ENCODE measurements at regions of chr6 and their contacts with region 1.

Region 1: DNA sequence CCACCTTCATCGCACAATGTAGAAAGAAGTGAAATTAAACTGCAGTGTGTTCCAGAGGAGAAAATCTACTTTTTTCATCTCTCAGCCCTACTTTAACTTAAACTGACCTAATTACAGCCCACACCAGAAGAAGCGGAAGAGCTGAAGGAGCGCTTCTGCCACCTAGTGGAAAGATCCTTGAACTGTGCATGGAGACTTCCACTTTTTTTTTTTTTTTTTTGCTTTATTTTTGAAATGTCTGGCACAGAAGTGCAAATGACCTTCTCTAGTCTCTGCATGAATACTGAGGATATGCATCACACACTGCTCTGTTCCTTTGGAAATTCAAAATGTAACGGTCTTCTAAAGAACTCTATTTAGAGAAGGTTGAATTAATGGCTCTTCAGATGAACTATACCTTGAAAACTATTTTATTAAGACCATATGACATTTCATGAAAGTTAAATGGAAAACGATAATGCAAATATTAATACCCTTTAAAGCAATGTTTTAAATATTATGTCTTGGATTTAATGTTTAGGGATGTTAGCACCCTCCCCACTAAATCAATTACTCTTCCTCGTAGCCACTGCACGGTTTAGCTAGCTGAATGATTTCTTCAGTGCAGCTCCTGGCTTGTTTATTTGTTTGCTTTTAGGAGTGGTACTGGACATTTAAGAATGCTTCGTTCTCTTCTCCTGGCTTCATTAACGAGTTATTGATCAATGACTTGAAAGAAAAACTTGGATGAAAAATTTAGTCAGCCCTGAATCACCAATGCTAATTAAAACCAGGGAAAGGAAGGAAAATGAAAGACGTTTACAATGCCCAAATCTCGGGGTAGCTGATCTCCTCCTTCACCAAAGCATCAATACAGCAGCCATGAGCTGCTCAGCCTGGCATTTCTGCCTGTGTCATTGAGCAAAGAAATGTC is 569.6 kb upstream of the GJE1 start:
- DNase-seq: peak; percentile 84
- ATAC-seq: peak; percentile 93
- H3K4me3 ChIP-seq: peak overlapping the region; percentile 20 to 71 (median 53)
- H3K4me3 Mint-ChIP-seq: peak overlapping the region; percentile 83
- H3K27ac ChIP-seq: peak overlapping the region in 1 of 2 donors; percentile 0
- H3K27ac Mint-ChIP-seq: peak overlapping the region; percentile 23
- H3K4me1 ChIP-seq: peaks cover 5 to 11% of the 10 kb centered on the region in 2 donors
- H3K4me1 Mint-ChIP-seq: peaks cover 10% of the 10 kb centered on the region
- H3K27me3 ChIP-seq: no peaks in the 10 kb centered on the region
- H3K27me3 Mint-ChIP-seq: peaks cover 4% of the 10 kb centered on the region
- CTCF ChIP-seq: peak; percentile 95

Region 2: GRCh38 chr6:139881728-139882211 is 1681.3 kb before region 1 on chr6:
- CTCF ChIA-PET with region 1: interaction called, 3 read pairs
- POLR2A ChIA-PET with region 1: no interaction called
- intact Hi-C with region 1: loop called (anchors 5 kb)
- DNase-seq: peak; percentile 51
- ATAC-seq: peak; percentile 36
- H3K4me3 ChIP-seq: no peak overlapping the region
- H3K4me3 Mint-ChIP-seq: no peak overlapping the region
- H3K27ac ChIP-seq: no peak overlapping the region
- H3K27ac Mint-ChIP-seq: no peak overlapping the region
- H3K4me1 ChIP-seq: peaks cover 24 to 25% of the 10 kb centered on the region in 2 donors
- H3K4me1 Mint-ChIP-seq: peaks cover 24% of the 10 kb centered on the region
- H3K27me3 ChIP-seq: no peaks in the 10 kb centered on the region
- H3K27me3 Mint-ChIP-seq: peaks cover 3% of the 10 kb centered on the region
- CTCF ChIP-seq: peak; percentile 74

Region 3: GRCh38 chr6:141140905-141141304 is 422.2 kb before region 1 on chr6:
- CTCF ChIA-PET with region 1: no interaction called
- POLR2A ChIA-PET with region 1: no interaction called
- intact Hi-C with region 1: loop called (anchors 10 kb)
- DNase-seq: no peak
- ATAC-seq: no peak
- H3K4me3 ChIP-seq: no peak overlapping the region
- H3K4me3 Mint-ChIP-seq: no peak overlapping the region
- H3K27ac ChIP-seq: no peak overlapping the region
- H3K27ac Mint-ChIP-seq: no peak overlapping the region
- H3K4me1 ChIP-seq: no peaks in the 10 kb centered on the region
- H3K4me1 Mint-ChIP-seq: no peaks in the 10 kb centered on the region
- H3K27me3 ChIP-seq: no peaks in the 10 kb centered on the region
- H3K27me3 Mint-ChIP-seq: no peaks in the 10 kb centered on the region
- CTCF ChIP-seq: no peak

Region 4: DNA sequence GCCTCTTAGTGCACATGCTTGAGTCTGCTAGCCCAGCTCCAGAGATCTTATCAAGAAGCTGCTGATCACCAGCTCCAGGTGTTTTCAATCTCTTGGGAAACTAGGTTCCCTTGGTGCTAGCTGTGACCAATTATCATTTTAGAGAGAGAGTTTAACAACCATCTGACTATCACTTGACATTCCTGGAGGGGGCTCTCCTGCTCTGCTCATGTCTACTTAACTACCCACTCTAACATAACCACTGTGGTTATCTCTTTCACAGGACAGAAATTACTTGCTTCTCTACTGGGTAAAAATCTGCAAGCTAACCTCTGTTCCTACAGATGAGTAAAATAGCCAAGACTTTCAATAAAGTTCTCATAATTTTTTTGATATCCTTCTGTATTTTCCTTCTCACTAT is 253.8 kb before region 1 on chr6:
- CTCF ChIA-PET with region 1: interaction called, 20 read pairs
- POLR2A ChIA-PET with region 1: no interaction called
- intact Hi-C with region 1: loop called (anchors 1 kb)
- DNase-seq: peak; percentile 29
- ATAC-seq: peak; percentile 49
- H3K4me3 ChIP-seq: no peak overlapping the region
- H3K4me3 Mint-ChIP-seq: no peak overlapping the region
- H3K27ac ChIP-seq: no peak overlapping the region
- H3K27ac Mint-ChIP-seq: no peak overlapping the region
- H3K4me1 ChIP-seq: no peaks in the 10 kb centered on the region
- H3K4me1 Mint-ChIP-seq: no peaks in the 10 kb centered on the region
- H3K27me3 ChIP-seq: no peaks in the 10 kb centered on the region
- H3K27me3 Mint-ChIP-seq: no peaks in the 10 kb centered on the region
- CTCF ChIP-seq: peak; percentile 26

Region 5: GRCh38 chr6:141388666-141389065 is 174.4 kb before region 1 on chr6:
- CTCF ChIA-PET with region 1: interaction called, 3 read pairs
- POLR2A ChIA-PET with region 1: no interaction called
- intact Hi-C with region 1: loop called (anchors 5 kb)
- DNase-seq: no peak
- ATAC-seq: no peak
- H3K4me3 ChIP-seq: no peak overlapping the region
- H3K4me3 Mint-ChIP-seq: no peak overlapping the region
- H3K27ac ChIP-seq: no peak overlapping the region
- H3K27ac Mint-ChIP-seq: no peak overlapping the region
- H3K4me1 ChIP-seq: no peaks in the 10 kb centered on the region
- H3K4me1 Mint-ChIP-seq: peaks cover 4% of the 10 kb centered on the region
- H3K27me3 ChIP-seq: no peaks in the 10 kb centered on the region
- H3K27me3 Mint-ChIP-seq: peaks cover 3% of the 10 kb centered on the region
- CTCF ChIP-seq: no peak

Region 6: DNA sequence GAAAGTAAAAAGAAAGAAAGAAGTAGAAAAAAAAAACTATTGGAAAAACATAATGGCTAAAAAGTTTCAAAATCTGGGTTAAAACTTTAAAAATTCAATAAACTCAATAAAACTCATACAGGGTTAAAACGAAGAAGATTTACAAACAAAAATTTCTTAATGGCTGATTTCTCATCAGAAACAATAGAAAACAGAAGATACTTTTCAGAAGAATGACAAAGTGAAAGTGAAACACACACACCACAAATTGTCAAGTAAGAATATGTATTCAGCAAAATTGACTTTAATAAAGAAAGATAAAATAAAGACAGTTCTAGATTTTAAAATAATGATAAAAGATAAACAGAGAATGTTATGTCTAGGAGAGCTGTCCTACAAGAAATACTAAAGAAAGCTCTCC is 49.3 kb before region 1 on chr6:
- CTCF ChIA-PET with region 1: no interaction called
- POLR2A ChIA-PET with region 1: no interaction called
- intact Hi-C with region 1: no loop called
- DNase-seq: no peak
- ATAC-seq: no peak
- H3K4me3 ChIP-seq: no peak overlapping the region
- H3K4me3 Mint-ChIP-seq: no peak overlapping the region
- H3K27ac ChIP-seq: no peak overlapping the region
- H3K27ac Mint-ChIP-seq: no peak overlapping the region
- H3K4me1 ChIP-seq: no peaks in the 10 kb centered on the region
- H3K4me1 Mint-ChIP-seq: peaks cover 2% of the 10 kb centered on the region
- H3K27me3 ChIP-seq: no peaks in the 10 kb centered on the region
- H3K27me3 Mint-ChIP-seq: no peaks in the 10 kb centered on the region
- CTCF ChIP-seq: no peak

Region 7: DNA sequence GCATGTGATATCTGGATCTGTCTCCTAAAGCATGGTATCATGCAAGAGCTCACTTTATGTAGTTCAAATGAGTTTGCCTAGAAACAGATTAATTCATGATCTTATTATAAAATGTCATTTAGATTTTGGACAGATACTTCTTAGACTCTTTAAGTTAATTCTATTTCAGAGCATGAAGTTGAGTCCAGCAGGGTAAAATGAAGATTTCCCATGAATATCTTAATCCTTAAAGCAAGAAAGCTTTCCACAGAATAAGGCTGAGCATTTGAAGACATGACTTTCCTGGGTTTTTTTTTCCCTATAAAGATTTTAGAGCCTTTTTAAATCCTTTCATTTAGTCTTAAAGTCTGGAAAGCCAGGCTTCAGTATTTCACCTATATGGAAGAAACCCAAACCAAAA is 13.6 kb after region 1 on chr6:
- CTCF ChIA-PET with region 1: interaction called, 4 read pairs
- POLR2A ChIA-PET with region 1: no interaction called
- intact Hi-C with region 1: loop called (anchors 1 kb)
- DNase-seq: no peak
- ATAC-seq: no peak
- H3K4me3 ChIP-seq: no peak overlapping the region
- H3K4me3 Mint-ChIP-seq: no peak overlapping the region
- H3K27ac ChIP-seq: no peak overlapping the region
- H3K27ac Mint-ChIP-seq: no peak overlapping the region
- H3K4me1 ChIP-seq: no peaks in the 10 kb centered on the region
- H3K4me1 Mint-ChIP-seq: no peaks in the 10 kb centered on the region
- H3K27me3 ChIP-seq: no peaks in the 10 kb centered on the region
- H3K27me3 Mint-ChIP-seq: no peaks in the 10 kb centered on the region
- CTCF ChIP-seq: no peak

Region 8: GRCh38 chr6:142112451-142113061 is 549.4 kb after region 1 on chr6:
- CTCF ChIA-PET with region 1: no interaction called
- POLR2A ChIA-PET with region 1: no interaction called
- intact Hi-C with region 1: loop called (anchors 5 kb)
- DNase-seq: peak; percentile 58
- ATAC-seq: no peak
- H3K4me3 ChIP-seq: no peak overlapping the region
- H3K4me3 Mint-ChIP-seq: no peak overlapping the region
- H3K27ac ChIP-seq: no peak overlapping the region
- H3K27ac Mint-ChIP-seq: no peak overlapping the region
- H3K4me1 ChIP-seq: no peaks in the 10 kb centered on the region
- H3K4me1 Mint-ChIP-seq: no peaks in the 10 kb centered on the region
- H3K27me3 ChIP-seq: no peaks in the 10 kb centered on the region
- H3K27me3 Mint-ChIP-seq: peaks cover 7% of the 10 kb centered on the region
- CTCF ChIP-seq: peak; percentile 95